GM12878 (cell line): ENCODE measurements at regions of chr17 and their contacts with region 1.

Region 1: DNA sequence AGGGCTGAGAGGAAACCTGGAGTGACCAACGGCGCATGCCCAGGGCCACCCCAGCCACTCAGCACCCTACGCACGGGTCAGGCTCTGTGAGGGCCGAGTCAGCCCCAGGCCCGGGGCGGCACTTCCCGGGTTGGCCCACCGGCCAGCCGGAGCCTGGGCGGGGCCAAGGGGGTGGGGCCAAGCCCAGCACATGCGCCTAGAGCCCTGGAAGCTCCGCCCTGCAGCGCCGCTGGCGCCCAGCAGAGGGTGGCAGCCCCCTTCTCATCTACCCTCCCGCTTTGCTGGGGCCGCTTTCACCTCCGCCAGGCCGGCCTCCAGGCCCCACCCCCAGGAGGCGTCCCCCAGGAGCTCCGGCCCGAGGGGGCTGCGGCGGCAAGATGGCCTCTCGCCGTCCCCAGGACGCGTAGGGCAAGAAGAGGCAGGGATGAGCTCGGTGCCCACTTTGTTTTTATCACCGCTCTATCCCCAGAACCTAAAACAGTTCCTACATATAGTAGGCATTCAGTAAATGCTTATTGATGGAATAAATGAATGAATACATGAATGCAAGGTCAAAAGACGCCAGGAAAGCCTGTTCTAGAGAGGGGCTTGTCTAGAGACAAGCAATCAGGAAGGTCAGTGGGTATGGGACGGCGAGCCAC is 31.3 kb downstream of the MYO18A start:
- DNase-seq: peak; percentile 79
- ATAC-seq: peak; percentile 90
- H3K4me3 ChIP-seq: peak overlapping the region; percentile 59
- H3K27ac ChIP-seq: peak overlapping the region; percentile 73
- H3K4me1 ChIP-seq: peaks cover 31% of the 10 kb centered on the region
- H3K27me3 ChIP-seq: no peaks in the 10 kb centered on the region
- CTCF ChIP-seq: peak; percentile 91 to 98 (median 97)
- EP300 ChIP-seq: no peak
- POLR2A ChIP-seq: peak; percentile 88
- RAD21 ChIP-seq: peak; percentile 88

Region 2: DNA sequence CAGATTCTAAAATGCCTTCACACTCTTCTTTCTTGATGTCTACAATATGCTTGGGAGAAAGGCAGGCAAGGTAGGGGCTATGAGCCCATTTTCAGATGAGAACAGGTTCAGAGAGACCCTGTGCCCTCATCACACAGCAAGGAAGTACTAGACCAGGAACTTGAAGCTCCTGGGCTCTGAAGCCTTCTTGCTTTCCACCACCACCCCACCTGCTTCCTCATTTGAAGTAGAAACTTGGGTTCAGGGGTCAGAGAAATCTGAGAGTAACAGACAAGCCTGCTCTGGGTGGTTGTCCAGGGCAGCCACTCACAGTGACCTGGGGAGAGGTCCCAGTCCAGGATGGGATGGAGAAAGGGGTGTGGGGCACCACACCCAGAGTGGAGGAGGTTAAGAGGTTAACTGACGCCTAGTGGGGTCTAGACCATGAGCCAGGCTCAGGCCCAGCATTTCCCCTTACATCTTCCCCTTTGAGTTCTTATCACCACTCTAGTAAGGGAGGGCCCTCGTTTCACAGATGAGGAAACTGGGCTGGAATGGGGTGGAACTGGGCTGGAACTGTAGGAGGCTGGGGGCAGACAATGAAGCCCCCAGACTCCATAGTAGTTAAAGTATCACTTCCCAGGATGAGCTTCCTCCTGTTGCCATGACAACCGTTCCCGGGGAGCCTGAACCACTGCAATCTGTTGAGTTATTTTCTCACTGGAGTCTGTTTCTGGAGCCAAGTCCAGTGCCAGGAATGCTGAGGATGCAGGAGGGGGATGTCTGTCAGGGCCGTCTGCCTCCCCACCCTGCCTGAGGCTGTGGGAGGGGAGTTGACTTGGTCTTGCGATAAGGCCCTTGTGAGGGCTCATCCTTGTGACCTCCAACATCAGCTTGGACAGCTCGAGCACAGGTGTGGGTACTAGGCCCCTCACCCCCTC is 181.4 kb before region 1 on chr17:
- CTCF ChIA-PET with region 1: interaction called, 17 read pairs
- POLR2A ChIA-PET with region 1: no interaction called
- RAD21 ChIA-PET with region 1: interaction called, 10 read pairs
- SMC1A ChIA-PET with region 1: interaction called, 4 read pairs
- in situ Hi-C with region 1: no loop called
- intact Hi-C with region 1: no loop called
- DNase-seq: no peak
- ATAC-seq: peak; percentile 59
- H3K4me3 ChIP-seq: no peak overlapping the region
- H3K27ac ChIP-seq: no peak overlapping the region
- H3K4me1 ChIP-seq: peaks cover 3% of the 10 kb centered on the region; the same call in 1 of the 2 replicates
- H3K27me3 ChIP-seq: peaks cover 0 to 2% of the 10 kb centered on the region in 2 experiments; a peak in 1 of 4 replicates
- CTCF ChIP-seq: no peak
- EP300 ChIP-seq: no peak
- POLR2A ChIP-seq: no peak
- RAD21 ChIP-seq: no peak

Region 3: DNA sequence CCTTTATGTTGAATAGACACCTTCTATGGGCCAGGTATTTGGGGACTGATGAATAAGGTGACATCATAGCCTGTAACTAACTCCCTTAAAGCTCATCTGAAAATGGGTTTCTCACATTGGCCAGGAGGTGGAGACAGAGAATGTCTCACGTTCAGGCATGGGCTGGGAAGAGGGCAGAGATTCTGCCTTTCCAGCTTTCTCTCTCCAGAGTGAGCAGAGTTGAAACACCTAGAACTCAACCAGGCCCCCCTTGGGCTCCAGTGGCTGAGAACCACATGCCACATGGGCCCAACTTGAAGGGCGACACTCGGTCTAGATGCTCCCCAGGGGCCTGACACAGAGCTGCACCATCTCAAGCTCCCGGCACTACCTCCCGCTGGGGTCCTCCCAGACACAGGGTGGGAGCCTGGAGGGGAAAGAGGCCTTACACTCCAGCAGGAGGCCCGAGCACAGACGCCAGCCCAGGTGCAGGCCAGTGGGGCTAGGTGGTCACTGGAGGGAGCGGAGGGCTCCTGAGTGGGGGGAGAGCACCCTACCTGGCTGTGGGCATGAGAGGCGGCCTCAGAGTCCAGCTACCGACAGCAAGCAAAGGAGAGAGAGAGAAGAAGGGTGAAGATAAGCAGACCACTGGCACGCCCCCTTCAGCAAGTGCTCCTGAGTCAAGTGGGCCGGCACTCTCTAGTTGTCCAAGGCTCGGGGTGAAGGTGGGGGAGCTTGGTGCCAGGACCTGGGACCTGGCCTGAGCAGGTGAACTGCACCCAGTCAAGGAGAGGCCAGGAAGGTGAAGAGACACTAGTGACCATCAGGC is 24.6 kb before region 1 on chr17:
- CTCF ChIA-PET with region 1: interaction called, 371 read pairs
- POLR2A ChIA-PET with region 1: interaction called, 4 read pairs
- RAD21 ChIA-PET with region 1: interaction called, 143 read pairs
- SMC1A ChIA-PET with region 1: interaction called, 67 read pairs
- in situ Hi-C with region 1: no loop called
- intact Hi-C with region 1: loop called (anchors 1 kb)
- DNase-seq: no peak
- ATAC-seq: peak; percentile 97
- H3K4me3 ChIP-seq: no peak overlapping the region
- H3K27ac ChIP-seq: no peak overlapping the region
- H3K4me1 ChIP-seq: no peaks in the 10 kb centered on the region
- H3K27me3 ChIP-seq: no peaks in the 10 kb centered on the region
- CTCF ChIP-seq: peak; percentile 71 to 97 (median 72); a peak in 5 of 6 replicates
- EP300 ChIP-seq: no peak
- POLR2A ChIP-seq: no peak
- RAD21 ChIP-seq: peak; percentile 86

Region 4: DNA sequence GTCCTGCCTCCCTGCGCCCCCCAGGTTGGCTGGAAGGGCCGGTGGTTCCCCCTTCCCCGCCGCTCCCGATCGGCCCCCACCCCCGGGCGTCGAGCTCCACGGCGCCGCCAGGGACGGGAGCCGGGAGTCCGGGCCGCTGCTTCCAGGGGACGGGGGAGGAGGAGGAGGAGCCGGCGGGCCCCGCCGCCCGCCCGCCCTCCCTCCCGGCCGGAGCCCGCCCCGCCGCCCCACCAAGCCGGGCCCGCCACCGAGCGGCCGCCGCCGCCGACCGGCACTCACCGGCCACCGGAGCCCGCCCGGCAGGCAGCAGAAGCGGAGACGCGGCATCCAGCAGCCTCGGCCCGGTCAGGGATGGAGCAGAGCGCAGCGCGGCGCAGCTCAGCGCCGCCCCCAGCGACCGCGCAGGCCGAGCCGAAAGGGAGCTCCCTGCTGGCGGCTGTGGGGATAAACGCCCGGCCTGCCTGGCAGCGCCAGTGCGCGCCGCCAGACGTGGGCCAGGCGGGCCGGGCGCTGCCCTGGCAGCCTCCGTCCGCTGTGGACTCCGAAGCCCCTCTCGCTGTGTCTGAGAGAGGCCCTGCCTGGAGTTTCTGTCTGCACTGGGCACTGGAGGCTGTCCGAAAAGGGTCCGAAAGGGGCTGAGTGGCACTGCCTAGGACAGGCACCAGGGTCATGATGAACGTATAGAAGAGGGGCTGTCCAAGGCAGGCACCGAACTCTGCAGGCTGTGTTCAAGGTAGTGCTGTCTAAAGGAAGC is 31.3 kb after region 1 on chr17 and contains the start of gene MYO18A:
- CTCF ChIA-PET with region 1: interaction called, 260 read pairs
- POLR2A ChIA-PET with region 1: interaction called, 54 read pairs
- RAD21 ChIA-PET with region 1: interaction called, 207 read pairs
- SMC1A ChIA-PET with region 1: interaction called, 158 read pairs
- in situ Hi-C with region 1: no loop called
- intact Hi-C with region 1: loop called (anchors 1 kb)
- DNase-seq: no peak
- ATAC-seq: peak; percentile 93
- H3K4me3 ChIP-seq: peak within 1 kb of the TSS; percentile 72; the same call in 1 of the 2 replicates
- H3K27ac ChIP-seq: no peak within 1 kb of the TSS
- H3K4me1 ChIP-seq: peaks cover 17% of the 10 kb centered on the region
- H3K27me3 ChIP-seq: no peaks in the 10 kb centered on the region
- CTCF ChIP-seq: peak; percentile 87 to 98 (median 89); a peak in 5 of 6 replicates
- EP300 ChIP-seq: no peak
- POLR2A ChIP-seq: peak; percentile 64
- RAD21 ChIP-seq: peak; percentile 58
- polyA plus RNA-seq, gene MYO18A: 2.9 to 3.9 TPM

Region 5: GRCh38 chr17:29225396-29225795 is 76.5 kb after region 1 on chr17:
- CTCF ChIA-PET with region 1: interaction called, 358 read pairs
- POLR2A ChIA-PET with region 1: interaction called, 14 read pairs
- RAD21 ChIA-PET with region 1: interaction called, 182 read pairs
- SMC1A ChIA-PET with region 1: interaction called, 150 read pairs
- in situ Hi-C with region 1: no loop called
- intact Hi-C with region 1: no loop called
- DNase-seq: no peak
- ATAC-seq: peak; percentile 71
- H3K4me3 ChIP-seq: no peak overlapping the region
- H3K27ac ChIP-seq: peak overlapping the region; percentile 31; the same call in 1 of the 2 replicates
- H3K4me1 ChIP-seq: peaks cover 7% of the 10 kb centered on the region
- H3K27me3 ChIP-seq: no peaks in the 10 kb centered on the region
- CTCF ChIP-seq: no peak
- EP300 ChIP-seq: no peak
- POLR2A ChIP-seq: no peak
- RAD21 ChIP-seq: no peak

Region 6: DNA sequence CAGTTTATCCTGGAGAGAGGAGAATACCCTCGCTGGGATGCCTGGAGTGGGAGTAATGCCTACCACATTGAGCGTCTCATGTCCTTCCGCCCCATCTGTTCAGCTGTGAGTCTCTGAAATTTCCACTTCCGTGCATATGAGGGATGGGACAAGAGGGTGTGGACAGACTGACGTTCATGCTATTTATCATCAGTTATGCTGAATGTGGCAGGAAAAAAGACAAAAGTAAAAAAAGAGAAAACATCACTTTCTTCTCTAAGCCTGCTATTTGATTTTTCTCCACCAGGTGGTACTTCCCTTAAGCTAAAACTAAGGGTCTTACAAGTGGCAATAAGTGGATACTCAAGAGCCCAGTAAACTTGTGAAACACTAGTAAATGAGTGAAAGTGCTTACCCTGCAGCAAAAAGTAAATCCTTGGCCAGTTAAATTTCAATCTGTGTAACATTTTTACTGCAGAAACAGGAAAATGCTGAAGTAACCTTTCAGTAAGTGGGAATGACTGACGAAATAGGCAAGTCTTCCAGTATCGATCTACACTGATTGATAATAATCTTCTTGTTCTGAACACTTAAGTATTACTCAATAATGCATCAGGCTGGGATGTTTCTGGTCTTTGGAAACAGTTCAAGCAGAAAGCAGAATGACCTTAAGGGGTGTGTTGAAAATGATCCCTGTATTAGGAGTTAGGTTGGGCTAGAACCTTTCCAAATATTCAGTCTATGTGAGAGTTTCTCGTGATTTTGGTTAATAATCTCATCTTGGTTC is 103.4 kb after region 1 on chr17:
- CTCF ChIA-PET with region 1: interaction called, 20 read pairs
- POLR2A ChIA-PET with region 1: interaction called, 6 read pairs
- RAD21 ChIA-PET with region 1: no interaction called
- SMC1A ChIA-PET with region 1: interaction called, 5 read pairs
- in situ Hi-C with region 1: no loop called
- intact Hi-C with region 1: no loop called
- DNase-seq: no peak
- ATAC-seq: peak; percentile 53
- H3K4me3 ChIP-seq: no peak overlapping the region
- H3K27ac ChIP-seq: no peak overlapping the region
- H3K4me1 ChIP-seq: no peaks in the 10 kb centered on the region
- H3K27me3 ChIP-seq: no peaks in the 10 kb centered on the region
- CTCF ChIP-seq: peak; percentile 19 to 47 (median 46); a peak in 4 of 6 replicates
- EP300 ChIP-seq: no peak
- POLR2A ChIP-seq: no peak
- RAD21 ChIP-seq: peak; percentile 30; the same call in 1 of the 2 replicates